AG04450 (cell line): ENCODE measurements at regions of chr12 and their contacts with region 1.

Region 1: GRCh38 chr12:121888478-121889266 is at the start of gene PSMD9:
- DNase-seq: peak; percentile 94
- H3K4me3 ChIP-seq: peak within 1 kb of the TSS; percentile 94
- H3K27ac ChIP-seq: peak within 1 kb of the TSS; percentile 98
- H3K27me3 ChIP-seq: no peaks in the 10 kb centered on the region
- CTCF ChIP-seq: peak; percentile 87
- polyA plus RNA-seq, gene PSMD9: 57.7 and 76.1 TPM in 2 replicates

Region 2: DNA sequence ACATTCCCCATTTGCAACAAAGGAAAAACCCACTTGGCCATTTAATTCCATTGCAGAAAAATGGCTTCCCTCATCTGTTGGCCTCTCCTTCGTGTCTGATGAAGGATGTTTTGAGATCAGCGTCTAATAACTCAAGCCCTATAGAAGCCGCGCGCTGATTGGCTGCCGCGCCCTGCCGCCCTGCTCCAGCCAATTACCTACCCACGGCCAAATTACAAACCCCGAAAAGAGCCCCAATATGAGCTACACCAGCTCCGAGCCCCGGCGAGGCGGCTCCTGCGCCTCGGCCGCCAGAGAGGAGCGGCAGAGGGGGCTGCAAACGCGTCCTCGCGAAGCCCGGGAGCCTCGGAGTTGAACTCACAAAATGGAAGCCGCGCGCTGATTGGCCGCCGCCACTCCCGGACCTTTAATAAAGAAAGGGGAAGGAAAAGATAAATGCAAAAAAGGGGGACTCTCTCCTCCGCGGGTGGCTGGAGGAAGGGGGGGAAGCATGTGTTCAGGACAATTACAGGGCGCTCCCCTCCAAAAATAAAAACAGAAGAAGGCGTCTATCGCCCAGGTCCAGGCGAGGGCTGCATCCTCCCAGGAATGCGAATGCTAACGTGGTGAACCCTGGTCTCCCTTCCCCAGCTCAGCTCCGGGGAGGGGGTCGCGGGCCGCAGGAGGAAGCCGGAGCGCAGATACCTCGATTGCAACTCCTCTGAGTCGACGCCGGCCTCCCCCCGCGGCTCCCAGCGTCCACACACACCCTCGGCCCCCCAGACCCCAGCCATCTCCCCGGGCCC is 85.6 kb before region 1 on chr12:
- CTCF ChIA-PET with region 1: no interaction called
- POLR2A ChIA-PET with region 1: interaction called, 10 read pairs
- DNase-seq: peak; percentile 92
- H3K4me3 ChIP-seq: peak overlapping the region; percentile 73
- H3K27ac ChIP-seq: peak overlapping the region; percentile 98
- H3K27me3 ChIP-seq: no peaks in the 10 kb centered on the region
- CTCF ChIP-seq: no peak

Region 3: GRCh38 chr12:121872546-121873215 is 16.0 kb before region 1 on chr12:
- CTCF ChIA-PET with region 1: interaction called, 4 read pairs
- POLR2A ChIA-PET with region 1: interaction called, 18 read pairs
- DNase-seq: peak; percentile 98
- H3K4me3 ChIP-seq: peak overlapping the region; percentile 27
- H3K27ac ChIP-seq: peak overlapping the region; percentile 97
- H3K27me3 ChIP-seq: no peaks in the 10 kb centered on the region
- CTCF ChIP-seq: no peak

Region 4: DNA sequence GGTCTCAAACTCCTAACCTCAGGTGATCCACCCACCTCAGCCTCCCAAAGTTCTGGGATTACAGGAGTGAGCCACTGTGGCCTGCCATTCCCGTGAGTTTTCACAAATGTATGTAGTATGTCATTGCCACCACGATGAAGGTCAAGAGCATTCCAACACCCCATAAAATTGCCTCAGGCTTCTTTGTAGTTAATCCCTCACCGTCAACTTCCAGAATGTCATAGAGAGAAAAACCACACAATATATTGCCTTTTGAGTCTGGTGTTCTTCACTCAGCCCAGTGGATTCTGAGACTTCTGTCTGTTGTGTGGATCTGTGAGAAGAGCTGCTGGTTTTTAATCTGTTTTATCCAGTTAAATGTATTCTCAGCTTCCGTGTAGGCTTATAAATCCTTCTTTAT is 17.1 kb after region 1 on chr12:
- CTCF ChIA-PET with region 1: no interaction called
- POLR2A ChIA-PET with region 1: no interaction called
- DNase-seq: no peak
- H3K4me3 ChIP-seq: no peak overlapping the region
- H3K27ac ChIP-seq: no peak overlapping the region
- H3K27me3 ChIP-seq: no peaks in the 10 kb centered on the region
- CTCF ChIP-seq: no peak